BJ (cell line): ENCODE measurements at regions of chr1 and their contacts with region 1.

Region 1: GRCh38 chr1:26787706-26788514 is at the start of gene PIGV:
- DNase-seq: no peak
- H3K4me3 ChIP-seq: peak within 1 kb of the TSS; percentile 54
- H3K27me3 ChIP-seq: no peaks in the 10 kb centered on the region
- CTCF ChIP-seq: no peak
- polyA plus RNA-seq, gene PIGV: 25.7 and 28.0 TPM in 2 replicates

Region 2: DNA sequence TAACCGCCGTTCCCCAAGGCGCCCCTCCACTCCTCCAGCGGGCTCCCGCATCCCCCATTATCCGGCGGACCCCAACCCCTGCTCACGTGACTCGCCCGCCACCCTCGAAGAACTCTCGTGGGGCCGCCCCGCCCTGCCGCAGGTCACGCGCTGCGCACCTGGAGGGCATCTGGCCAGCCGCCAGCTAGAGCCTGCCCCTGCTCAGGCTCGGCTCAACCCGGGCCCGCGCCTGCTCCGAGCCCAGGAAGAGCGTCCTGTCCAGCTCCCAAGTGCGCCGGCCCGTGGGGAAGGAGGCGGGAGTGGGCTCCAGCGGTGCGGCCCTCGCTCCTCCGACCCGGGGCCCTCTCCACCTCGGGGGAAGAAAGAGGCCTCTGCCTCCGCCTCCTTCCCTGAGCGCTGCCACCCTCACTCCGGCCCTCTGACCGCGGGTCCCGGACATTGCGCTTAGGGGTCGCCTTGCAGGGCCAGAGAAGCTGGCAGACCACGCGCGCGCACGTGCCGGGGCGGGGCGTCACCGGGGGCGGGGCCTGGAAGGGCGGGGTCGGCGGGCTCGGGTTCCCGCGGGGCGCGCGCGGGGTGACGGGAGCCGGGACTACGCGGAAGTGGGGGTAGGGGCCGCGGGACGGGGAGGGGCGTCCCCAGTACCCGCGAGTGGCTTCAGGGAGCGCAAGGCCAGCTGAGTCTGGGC is 287.3 kb before region 1 on chr1:
- CTCF ChIA-PET with region 1: interaction called, 13 read pairs
- POLR2A ChIA-PET with region 1: no interaction called
- DNase-seq: no peak
- H3K4me3 ChIP-seq: peak overlapping the region; percentile 87
- H3K27me3 ChIP-seq: no peaks in the 10 kb centered on the region
- CTCF ChIP-seq: no peak

Region 3: DNA sequence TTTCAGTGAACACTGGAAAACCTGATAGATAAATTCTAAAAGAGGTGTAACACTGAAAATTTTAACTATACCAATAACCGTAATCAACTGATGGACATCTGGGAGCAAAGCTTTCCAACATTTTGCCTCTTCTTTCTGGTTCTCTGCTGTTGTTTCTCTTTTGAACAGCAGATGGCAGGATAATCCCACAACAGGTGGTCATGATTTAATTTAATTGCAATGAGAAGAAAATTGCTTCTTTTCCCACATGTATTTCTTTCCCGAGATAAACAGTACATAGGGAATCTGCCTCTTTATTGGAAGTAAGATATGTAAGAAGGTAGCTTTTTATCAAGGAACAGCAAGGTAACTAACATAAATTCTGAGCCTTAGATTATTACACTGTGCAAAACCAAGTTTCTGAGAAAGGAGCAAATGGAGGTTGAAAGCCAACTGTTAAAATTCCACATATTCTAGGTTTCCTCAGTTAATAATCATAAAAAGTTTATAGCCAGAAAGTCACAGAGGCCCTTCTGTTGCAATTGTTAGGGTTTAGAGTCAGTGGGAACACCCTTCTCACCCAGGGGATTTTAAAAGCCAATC is 185.4 kb before region 1 on chr1:
- CTCF ChIA-PET with region 1: interaction called, 210 read pairs
- POLR2A ChIA-PET with region 1: no interaction called
- DNase-seq: no peak
- H3K4me3 ChIP-seq: no peak overlapping the region
- H3K27me3 ChIP-seq: peaks cover 2% of the 10 kb centered on the region; the same call in 1 of the 2 replicates
- CTCF ChIP-seq: peak; percentile 73

Region 4: GRCh38 chr1:26614655-26615411 is 173.1 kb before region 1 on chr1:
- CTCF ChIA-PET with region 1: interaction called, 25 read pairs
- POLR2A ChIA-PET with region 1: no interaction called
- DNase-seq: no peak
- H3K4me3 ChIP-seq: no peak overlapping the region
- H3K27me3 ChIP-seq: 0 out of 2 replicates have a peak, but pooled peaks cover 2% of the 10 kb centered on the region
- CTCF ChIP-seq: no peak

Region 5: GRCh38 chr1:26700711-26701110 is 87.2 kb before region 1 on chr1:
- CTCF ChIA-PET with region 1: interaction called, 15 read pairs
- POLR2A ChIA-PET with region 1: interaction called, 5 read pairs
- DNase-seq: no peak
- H3K4me3 ChIP-seq: no peak overlapping the region
- H3K27me3 ChIP-seq: no peaks in the 10 kb centered on the region
- CTCF ChIP-seq: no peak

Region 6: DNA sequence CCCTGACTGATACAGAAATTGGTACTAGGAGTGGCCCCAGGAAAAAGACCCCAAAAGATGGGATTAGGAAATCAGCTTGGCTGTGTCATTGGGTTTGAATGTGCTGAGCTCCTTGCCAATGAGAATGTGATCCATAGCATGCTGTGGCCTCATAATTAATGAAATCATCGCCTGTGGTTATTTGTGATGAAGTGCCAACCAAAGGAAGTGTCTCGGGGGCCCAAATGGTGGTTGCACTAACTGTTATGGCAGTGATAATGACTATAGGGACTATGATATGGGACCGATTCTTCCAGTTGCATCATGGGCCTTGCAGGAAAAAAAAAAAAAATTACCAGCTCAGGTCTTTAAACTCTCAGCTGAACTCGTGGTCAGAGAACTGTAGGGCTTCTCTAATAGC is 23.1 kb after region 1 on chr1:
- CTCF ChIA-PET with region 1: interaction called, 11 read pairs
- POLR2A ChIA-PET with region 1: no interaction called
- DNase-seq: no peak
- H3K4me3 ChIP-seq: no peak overlapping the region
- H3K27me3 ChIP-seq: no peaks in the 10 kb centered on the region
- CTCF ChIP-seq: no peak